BJ (cell line): ENCODE measurements at regions of chr9 and their contacts with region 1.

Region 1: DNA sequence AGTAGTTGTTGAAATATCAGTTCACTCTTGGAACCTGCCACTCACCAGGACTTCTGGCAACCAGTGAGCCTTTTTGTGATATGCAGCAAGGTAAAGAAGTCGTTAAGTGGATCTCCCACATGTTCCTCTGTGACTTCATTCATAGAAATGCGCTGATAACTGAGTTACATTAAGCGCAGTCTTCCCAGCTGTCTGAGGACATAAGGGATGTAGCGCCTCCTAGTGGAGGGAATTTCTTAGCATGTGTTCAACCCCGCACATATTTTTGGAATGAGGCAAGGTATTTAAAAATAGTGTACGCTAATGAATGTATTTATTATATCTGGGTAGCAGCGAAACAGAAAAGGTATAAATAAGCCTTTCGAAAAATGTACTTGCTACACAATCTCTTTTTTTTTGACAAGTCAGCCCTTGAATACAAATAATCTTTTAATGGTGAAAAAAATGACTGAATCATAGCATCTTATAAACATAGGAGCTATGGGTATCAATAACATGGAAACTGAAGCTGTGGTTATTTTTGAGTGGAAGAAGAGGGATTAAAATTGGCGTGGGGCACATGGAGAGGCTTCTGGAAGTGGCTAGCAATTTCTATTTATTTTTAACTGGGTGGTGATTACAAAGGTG is 38.0 kb downstream of the PALM2AKAP2 start:
- DNase-seq: peak; percentile 88
- H3K4me3 ChIP-seq: no peak overlapping the region
- H3K27me3 ChIP-seq: no peaks in the 10 kb centered on the region
- CTCF ChIP-seq: peak; percentile 72

Region 2: DNA sequence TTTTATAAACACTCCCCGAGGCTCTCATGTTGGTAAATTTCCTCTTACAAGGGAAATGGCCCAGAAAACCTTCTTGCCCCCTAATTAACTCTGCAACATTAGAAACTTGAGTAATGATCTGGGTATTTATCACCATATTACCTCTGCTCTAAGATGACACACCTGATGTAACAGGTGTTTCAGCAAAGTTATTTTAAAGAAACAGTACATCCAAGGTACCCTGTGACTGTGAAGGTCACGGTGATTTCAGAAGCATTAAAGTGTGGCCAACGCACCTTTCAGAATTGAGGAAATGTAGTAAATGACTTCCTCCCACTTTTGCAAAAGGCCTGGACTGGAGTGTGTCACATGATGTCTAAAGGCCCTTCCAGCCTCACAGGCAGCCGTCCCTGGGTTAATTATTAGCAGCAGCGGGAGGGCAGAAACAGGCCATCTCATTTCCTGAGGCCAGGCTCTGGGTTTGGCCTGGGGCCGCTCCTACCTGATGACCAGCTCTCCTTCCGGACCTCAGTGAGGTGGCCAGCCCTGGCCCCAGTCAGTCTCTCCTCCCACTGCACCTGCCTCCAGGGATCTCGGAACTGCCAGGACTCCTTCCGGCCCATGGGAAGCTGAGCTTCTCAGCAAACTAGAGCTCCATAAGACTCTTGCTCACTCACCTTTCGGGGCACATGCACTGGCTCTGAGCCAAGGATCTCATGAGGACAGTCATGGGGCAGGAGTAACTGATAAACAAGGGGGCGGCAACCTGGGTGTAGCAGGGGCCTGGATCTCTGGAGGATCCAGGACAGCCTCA is 340.5 kb before region 1 on chr9:
- CTCF ChIA-PET with region 1: no interaction called
- POLR2A ChIA-PET with region 1: no interaction called
- DNase-seq: no peak
- H3K4me3 ChIP-seq: no peak overlapping the region
- H3K27me3 ChIP-seq: no peaks in the 10 kb centered on the region
- CTCF ChIP-seq: no peak

Region 3: GRCh38 chr9:109806506-109807115 is 11.3 kb before region 1 on chr9:
- CTCF ChIA-PET with region 1: interaction called, 11 read pairs
- POLR2A ChIA-PET with region 1: no interaction called
- DNase-seq: no peak
- H3K4me3 ChIP-seq: no peak overlapping the region
- H3K27me3 ChIP-seq: no peaks in the 10 kb centered on the region
- CTCF ChIP-seq: no peak

Region 4: DNA sequence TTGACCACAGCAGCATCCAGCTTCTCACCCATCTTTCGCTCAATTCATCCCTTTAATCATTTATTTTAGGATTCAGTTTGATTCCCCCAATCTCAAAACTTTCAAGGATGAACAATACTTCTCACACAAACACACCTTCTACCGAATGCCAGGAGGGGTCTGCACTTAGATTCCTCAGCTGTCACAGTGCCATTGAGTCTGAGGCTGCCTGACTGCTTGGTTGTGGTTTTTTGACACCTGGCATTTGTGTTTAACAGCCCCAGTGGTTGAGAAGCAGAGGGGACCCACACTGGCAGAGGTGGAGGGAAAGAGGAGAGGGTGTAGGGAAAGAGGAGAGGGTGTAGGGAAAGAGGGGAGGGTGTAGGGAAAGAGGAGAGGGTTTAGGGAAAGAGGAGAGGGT is 16.9 kb after region 1 on chr9:
- CTCF ChIA-PET with region 1: no interaction called
- POLR2A ChIA-PET with region 1: no interaction called
- DNase-seq: no peak
- H3K4me3 ChIP-seq: no peak overlapping the region
- H3K27me3 ChIP-seq: no peaks in the 10 kb centered on the region
- CTCF ChIP-seq: no peak